Activated naive CD4-positive, alpha-beta T cell treated with anti-CD3 and anti-CD28 coated beads, Interleukin-2, amount 10 ng/mL, durations not matched to agents 7 days and 5 days (primary cell): ENCODE measurements at regions of chr20 and their contacts with region 1.

Region 1: GRCh38 chr20:2688041-2688591 is 4.5 kb upstream of the EBF4 start:
- DNase-seq: peak; percentile 86
- H3K4me3 Mint-ChIP-seq: no peak overlapping the region
- H3K27ac Mint-ChIP-seq: no peak overlapping the region
- H3K4me1 Mint-ChIP-seq: peaks cover 28% of the 10 kb centered on the region
- H3K27me3 Mint-ChIP-seq: peaks cover 60% of the 10 kb centered on the region

Region 2: DNA sequence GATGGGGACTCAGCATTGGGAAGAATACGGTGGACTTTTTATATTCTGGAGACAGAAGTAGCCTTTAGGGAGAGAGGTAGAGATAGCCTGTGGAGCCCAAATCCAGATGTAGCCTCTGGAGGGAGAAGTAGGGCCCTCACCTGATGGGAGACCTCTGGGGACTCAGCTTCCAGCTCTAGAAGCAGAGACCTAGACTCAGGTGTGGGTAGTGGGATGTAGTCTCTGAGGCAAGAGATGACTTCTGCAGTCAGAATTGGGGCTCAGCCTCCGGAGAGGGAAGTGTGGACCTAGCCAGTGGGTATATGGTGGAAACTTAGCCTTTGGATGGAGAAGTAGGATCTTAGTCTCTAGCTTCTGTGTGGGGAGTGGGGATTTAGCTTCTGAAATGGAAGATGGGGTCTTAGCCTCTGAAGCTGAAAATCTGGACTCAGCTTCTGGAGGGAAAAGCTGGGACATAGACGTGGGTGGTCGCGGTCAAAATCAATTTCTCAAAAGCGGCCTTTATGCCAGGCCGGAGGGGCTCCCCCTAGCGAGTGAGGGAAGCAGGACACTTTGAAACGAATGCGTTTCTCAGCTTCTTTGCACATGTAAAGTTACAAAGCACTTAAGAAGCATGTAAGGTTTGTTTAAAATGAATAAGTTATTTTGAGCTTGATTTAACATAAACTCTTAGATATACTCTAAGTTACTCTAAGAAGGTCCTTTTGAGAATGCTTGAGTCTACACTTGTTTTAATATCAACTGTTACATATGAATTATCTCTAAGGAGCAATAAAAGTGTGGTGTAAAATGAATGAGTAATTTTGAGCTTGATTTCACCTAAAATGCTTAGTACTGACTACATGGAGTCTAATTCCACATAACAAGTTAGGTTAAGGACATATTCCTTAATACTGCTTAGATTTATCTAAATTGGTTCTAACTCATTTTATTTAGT is 166.5 kb before region 1 on chr20:
- CTCF ChIA-PET with region 1: no interaction called
- DNase-seq: peak; percentile 68
- H3K4me3 Mint-ChIP-seq: no peak overlapping the region
- H3K27ac Mint-ChIP-seq: no peak overlapping the region
- H3K4me1 Mint-ChIP-seq: peaks cover 25% of the 10 kb centered on the region
- H3K27me3 Mint-ChIP-seq: peaks cover 35% of the 10 kb centered on the region

Region 3: DNA sequence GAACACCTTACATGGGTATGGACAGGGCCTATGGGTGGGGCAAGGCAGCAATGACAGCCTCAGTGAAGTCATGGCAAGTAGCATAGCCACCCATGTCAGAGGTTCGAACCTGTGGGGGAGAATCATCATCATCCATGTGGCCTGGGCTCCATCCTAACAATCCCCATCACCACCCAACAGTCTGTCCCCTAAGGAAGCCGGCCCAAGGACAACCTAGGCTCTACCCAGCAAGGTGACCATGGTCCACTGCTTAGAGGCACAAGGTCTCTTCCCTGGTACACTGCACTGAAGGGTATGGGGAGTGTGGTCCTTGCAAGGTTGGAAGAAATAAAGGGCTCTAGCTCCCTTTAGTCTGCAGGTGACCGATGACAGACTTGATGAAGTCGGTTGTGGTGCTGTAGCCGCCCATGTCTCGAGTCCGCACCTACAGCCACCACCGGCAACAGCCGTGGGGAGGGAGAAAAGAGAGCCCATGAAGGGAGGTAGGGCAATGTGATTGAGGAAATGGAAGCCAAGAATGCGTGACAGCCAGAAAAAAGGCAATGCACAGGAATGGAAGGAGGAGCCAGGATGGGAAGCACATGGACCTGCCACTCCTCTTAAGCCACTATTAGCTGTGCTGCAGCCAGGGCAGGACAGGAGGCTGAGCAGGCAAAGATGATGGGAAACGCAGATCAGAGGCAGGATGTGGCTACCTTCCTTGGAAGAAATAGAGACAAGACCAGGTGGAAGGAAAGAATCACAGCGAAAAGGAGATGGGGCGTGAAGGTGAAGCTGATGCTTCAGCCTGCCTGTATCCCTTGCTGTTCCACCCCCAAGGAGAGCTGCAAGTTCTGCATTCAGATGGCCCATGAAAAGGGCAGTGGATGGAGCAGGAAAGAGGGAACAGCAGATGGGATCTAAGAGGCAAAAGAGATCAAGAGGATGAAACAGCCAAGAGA is 29.4 kb before region 1 on chr20:
- CTCF ChIA-PET with region 1: no interaction called
- DNase-seq: no peak
- H3K4me3 Mint-ChIP-seq: no peak overlapping the region
- H3K27ac Mint-ChIP-seq: peak overlapping the region; percentile 78
- H3K4me1 Mint-ChIP-seq: peaks cover 70% of the 10 kb centered on the region
- H3K27me3 Mint-ChIP-seq: no peaks in the 10 kb centered on the region

Region 4: DNA sequence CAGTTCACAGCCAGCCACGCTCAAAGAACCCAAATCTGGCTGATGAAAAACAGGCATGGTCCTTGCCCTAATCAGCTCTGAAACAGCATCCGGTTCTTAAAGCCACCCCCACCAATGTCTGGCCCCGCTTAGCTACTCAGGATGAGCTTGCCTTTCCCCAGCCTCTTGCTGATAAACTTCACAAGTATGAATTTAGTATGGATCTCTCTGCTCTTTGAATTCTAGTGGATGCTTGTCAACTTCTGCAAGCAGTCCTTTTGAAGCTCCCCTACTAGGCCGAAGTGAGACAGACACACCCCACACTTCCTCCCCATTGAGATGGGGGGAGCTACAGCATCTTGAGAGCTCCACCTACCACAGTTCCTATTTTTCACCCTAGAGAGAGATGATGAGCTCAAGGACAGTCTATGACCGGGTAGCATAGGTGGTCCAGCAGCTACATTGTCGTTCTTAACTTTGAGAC is 41.2 kb after region 1 on chr20:
- CTCF ChIA-PET with region 1: interaction called, 14 read pairs
- DNase-seq: peak; percentile 56
- H3K4me3 Mint-ChIP-seq: peak overlapping the region; percentile 1
- H3K27ac Mint-ChIP-seq: peak overlapping the region; percentile 85
- H3K4me1 Mint-ChIP-seq: peaks cover 19% of the 10 kb centered on the region
- H3K27me3 Mint-ChIP-seq: peaks cover 18% of the 10 kb centered on the region

Region 5: DNA sequence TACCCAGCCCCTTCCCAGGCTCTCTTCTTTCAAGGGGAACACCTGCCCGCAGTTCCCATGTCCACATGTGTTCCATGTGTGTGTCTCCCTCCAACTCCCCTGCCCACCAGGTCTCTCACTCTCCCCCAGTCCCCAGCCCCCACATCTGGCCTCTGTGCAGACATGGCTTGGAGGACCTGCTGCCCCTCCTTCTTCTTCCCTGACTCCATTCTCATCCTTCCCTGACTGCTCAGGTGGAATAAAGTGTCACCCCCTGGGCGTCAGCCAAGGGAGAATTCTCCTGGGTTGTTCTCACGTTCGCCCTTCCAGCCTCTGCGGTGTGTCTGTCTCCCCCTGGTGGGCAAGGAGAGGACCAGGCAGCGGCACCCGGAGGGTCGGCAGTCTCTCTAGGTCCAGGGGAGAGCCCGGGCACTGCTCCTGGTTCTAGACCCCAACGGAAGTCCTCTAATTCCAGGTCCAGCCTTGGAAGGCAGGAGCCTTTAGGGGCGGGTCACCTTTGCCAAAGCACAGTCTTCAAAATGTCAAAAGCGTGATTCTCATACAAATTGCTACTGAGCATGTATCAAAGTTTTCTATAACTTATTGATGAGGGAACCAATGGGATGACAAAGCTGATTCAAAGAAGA is 54.9 kb after region 1 on chr20:
- CTCF ChIA-PET with region 1: interaction called, 58 read pairs
- DNase-seq: peak; percentile 78
- H3K4me3 Mint-ChIP-seq: no peak overlapping the region
- H3K27ac Mint-ChIP-seq: peak overlapping the region; percentile 78
- H3K4me1 Mint-ChIP-seq: peaks cover 32% of the 10 kb centered on the region
- H3K27me3 Mint-ChIP-seq: peaks cover 38% of the 10 kb centered on the region

Region 6: GRCh38 chr20:2752567-2753460 is 64.7 kb after region 1 on chr20:
- CTCF ChIA-PET with region 1: interaction called, 36 read pairs
- DNase-seq: peak; percentile 60
- H3K4me3 Mint-ChIP-seq: peak overlapping the region; percentile 69
- H3K27ac Mint-ChIP-seq: no peak overlapping the region
- H3K4me1 Mint-ChIP-seq: peaks cover 27% of the 10 kb centered on the region
- H3K27me3 Mint-ChIP-seq: peaks cover 95% of the 10 kb centered on the region

Region 7: DNA sequence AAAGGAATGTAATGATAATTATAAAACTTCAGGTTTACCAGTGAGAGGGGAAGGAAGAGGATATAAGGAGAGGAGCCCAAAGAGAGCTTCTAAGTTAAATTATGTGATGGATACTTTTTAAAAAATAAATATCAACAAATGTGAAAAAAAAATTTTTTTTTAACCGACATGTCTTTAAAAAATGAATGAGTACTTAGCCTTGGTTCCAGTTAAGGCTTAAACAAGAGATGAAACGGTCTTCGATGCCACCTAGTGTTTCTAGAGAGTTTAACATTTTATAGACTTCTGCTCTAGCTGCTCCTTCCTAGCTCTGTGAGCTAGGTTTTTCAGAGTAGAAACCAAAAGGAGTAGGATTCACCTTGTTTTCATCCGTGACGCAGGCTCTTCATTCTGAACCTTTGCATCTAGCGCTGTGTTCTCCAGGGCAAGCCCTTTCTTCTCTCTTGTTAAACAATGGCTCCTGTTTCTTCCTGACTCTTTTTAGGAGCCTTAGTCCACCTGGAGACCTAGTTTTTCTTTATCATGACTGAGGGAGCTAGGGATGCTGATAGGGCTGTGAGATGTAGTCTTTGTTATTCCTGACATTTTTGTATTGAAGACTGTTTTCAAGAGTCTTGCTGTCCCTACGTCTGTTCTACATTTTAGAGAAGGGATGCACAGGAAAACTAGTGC is 312.9 kb after region 1 on chr20:
- CTCF ChIA-PET with region 1: interaction called, 18 read pairs
- DNase-seq: no peak
- H3K4me3 Mint-ChIP-seq: no peak overlapping the region
- H3K27ac Mint-ChIP-seq: peak overlapping the region; percentile 28
- H3K4me1 Mint-ChIP-seq: no peaks in the 10 kb centered on the region
- H3K27me3 Mint-ChIP-seq: no peaks in the 10 kb centered on the region